Activated B cell treated with CpG ODN at 0.5 μM for 24 hours (primary cell): ENCODE measurements at regions of chr20 and their contacts with region 1.

Region 1: GRCh38 chr20:3045816-3046676 is at the start of gene MRPS26:
- DNase-seq: peak; percentile 88
- ATAC-seq: peak; percentile 91
- H3K4me3 Mint-ChIP-seq: peak within 1 kb of the TSS; percentile 84
- H3K27ac Mint-ChIP-seq: peak within 1 kb of the TSS; percentile 89
- H3K4me1 Mint-ChIP-seq: peaks cover 14% of the 10 kb centered on the region
- H3K27me3 Mint-ChIP-seq: no peaks in the 10 kb centered on the region
- CTCF ChIP-seq: no peak
- total RNA-seq, gene MRPS26: 30.6 and 34.7 TPM in 2 replicates

Region 2: GRCh38 chr20:2086177-2086979 is 959.7 kb before region 1 on chr20:
- CTCF ChIA-PET with region 1: no interaction called
- POLR2A ChIA-PET with region 1: no interaction called
- intact Hi-C with region 1: no loop called
- DNase-seq: no peak
- ATAC-seq: no peak
- H3K4me3 Mint-ChIP-seq: no peak overlapping the region
- H3K27ac Mint-ChIP-seq: no peak overlapping the region
- H3K4me1 Mint-ChIP-seq: no peaks in the 10 kb centered on the region
- H3K27me3 Mint-ChIP-seq: peaks cover 36% of the 10 kb centered on the region
- CTCF ChIP-seq: no peak

Region 3: DNA sequence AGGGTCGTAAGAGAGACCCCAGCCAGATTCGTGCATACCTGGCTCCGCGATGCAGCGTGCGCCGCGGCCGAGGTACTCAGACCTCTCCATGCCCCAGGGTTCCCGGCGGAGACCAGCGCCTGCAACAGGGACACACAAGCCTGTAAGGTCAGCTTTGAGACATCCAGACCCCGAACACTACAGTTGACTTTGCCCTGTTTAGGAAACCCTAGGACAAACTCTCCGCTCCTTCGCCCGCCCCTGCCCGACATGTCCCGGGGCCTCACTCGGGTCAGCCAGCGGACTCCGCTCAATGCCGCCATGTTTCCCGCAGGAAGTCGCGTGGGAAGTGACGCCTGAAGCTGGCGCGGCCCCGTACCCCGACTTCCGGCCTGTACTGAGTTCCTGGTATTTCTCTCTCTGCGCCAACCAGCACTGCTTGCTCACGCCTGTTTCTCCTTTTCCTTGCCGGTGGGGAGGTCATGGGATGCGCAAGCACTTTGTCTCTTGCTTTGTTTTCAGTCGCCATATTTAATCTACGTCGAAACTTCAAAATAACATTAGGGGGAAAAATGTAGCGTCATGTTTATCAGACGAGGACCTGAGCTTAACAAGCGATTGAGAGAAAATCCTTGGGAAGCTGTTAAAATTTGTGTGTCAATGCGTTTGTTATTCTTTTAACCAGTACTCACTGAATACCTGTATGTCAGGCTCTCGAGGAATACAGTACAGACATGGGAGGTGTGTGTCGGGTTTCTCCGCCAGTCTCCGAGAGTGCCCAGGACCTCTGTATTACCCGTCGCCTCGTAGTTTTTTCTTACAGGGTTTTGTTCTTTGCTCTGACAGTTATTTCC is 381.9 kb before region 1 on chr20 and contains the start of gene IDH3B:
- CTCF ChIA-PET with region 1: no interaction called
- POLR2A ChIA-PET with region 1: no interaction called
- intact Hi-C with region 1: loop called (anchors 1 kb)
- DNase-seq: peak; percentile 84
- ATAC-seq: peak; percentile 95
- H3K4me3 Mint-ChIP-seq: peak within 1 kb of the TSS; percentile 93
- H3K27ac Mint-ChIP-seq: peak within 1 kb of the TSS; percentile 98
- H3K4me1 Mint-ChIP-seq: peaks cover 19% of the 10 kb centered on the region
- H3K27me3 Mint-ChIP-seq: peaks cover 6% of the 10 kb centered on the region
- CTCF ChIP-seq: no peak
- total RNA-seq, gene IDH3B: 121 and 127 TPM in 2 replicates

Region 4: GRCh38 chr20:2880650-2881049 is 165.4 kb before region 1 on chr20:
- CTCF ChIA-PET with region 1: no interaction called
- POLR2A ChIA-PET with region 1: no interaction called
- intact Hi-C with region 1: no loop called
- DNase-seq: no peak
- ATAC-seq: no peak
- H3K4me3 Mint-ChIP-seq: no peak overlapping the region
- H3K27ac Mint-ChIP-seq: no peak overlapping the region
- H3K4me1 Mint-ChIP-seq: peaks cover 50% of the 10 kb centered on the region
- H3K27me3 Mint-ChIP-seq: no peaks in the 10 kb centered on the region
- CTCF ChIP-seq: no peak

Region 5: DNA sequence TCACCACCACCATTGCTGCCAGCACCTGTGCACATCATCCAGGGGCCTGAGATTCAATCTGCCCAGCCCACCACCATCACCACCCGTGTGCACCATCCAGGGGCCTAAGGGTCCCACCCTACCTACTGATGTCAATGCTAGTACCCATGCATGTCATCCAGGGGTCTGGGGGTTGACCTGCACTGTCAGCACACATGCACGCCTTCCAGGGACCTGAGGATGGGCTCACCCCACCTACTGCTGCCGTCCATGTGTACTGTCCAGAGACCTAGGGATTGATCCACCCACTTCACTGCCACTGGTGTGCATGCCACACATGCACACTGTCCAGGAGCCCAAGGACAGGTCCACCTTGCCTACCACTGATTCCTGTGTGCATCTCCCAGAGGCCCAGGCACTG is 13.4 kb after region 1 on chr20:
- CTCF ChIA-PET with region 1: no interaction called
- POLR2A ChIA-PET with region 1: no interaction called
- intact Hi-C with region 1: no loop called
- DNase-seq: no peak
- ATAC-seq: no peak
- H3K4me3 Mint-ChIP-seq: no peak overlapping the region
- H3K27ac Mint-ChIP-seq: no peak overlapping the region
- H3K4me1 Mint-ChIP-seq: peaks cover 3% of the 10 kb centered on the region
- H3K27me3 Mint-ChIP-seq: no peaks in the 10 kb centered on the region
- CTCF ChIP-seq: no peak

Region 6: GRCh38 chr20:3092611-3093379 is 46.7 kb after region 1 on chr20:
- CTCF ChIA-PET with region 1: no interaction called
- POLR2A ChIA-PET with region 1: no interaction called
- intact Hi-C with region 1: loop called (anchors 2 kb)
- DNase-seq: peak; percentile 47
- ATAC-seq: peak; percentile 54
- H3K4me3 Mint-ChIP-seq: peak overlapping the region; percentile 94
- H3K27ac Mint-ChIP-seq: peak overlapping the region; percentile 95
- H3K4me1 Mint-ChIP-seq: peaks cover 23% of the 10 kb centered on the region
- H3K27me3 Mint-ChIP-seq: peaks cover 22% of the 10 kb centered on the region
- CTCF ChIP-seq: no peak

Region 7: DNA sequence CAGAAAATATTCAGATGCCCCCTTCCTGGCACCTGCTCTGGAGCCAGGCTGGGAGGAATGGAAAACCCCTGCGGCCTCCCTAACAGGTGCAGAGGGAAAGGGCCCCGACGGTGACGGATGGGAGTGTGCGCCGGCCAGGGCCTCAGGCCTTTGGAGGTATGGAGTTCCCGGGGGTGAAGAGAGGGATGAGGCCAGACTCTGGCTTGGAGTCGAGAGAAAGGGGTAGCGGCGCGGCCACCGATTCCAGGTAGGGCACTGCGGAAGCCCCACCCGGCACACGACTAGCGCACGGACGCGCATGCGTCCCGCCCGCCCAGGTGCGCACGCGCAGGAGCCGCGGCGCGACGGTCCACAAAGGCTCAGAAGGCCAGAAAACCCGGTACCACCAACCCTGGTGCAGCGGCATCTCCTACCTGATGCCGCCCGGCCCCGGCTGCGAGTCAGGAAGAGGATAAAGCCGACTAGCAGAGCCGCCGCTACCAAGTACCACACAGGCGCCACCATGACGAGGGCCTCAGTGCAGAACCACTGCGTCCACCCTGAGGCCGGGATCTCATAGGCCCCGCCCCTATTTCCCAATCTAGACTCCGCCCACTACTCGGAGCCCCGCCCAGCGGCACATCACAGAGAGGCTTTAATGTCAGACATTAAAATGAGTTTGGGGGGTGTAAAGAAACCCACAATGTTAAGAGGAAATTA is 158.2 kb after region 1 on chr20 and contains the start of gene DDRGK1:
- CTCF ChIA-PET with region 1: no interaction called
- POLR2A ChIA-PET with region 1: interaction called, 3 read pairs
- intact Hi-C with region 1: loop called (anchors 1 kb)
- DNase-seq: peak; percentile 93
- ATAC-seq: peak; percentile 93
- H3K4me3 Mint-ChIP-seq: peak within 1 kb of the TSS; percentile 97
- H3K27ac Mint-ChIP-seq: peak within 1 kb of the TSS; percentile 94
- H3K4me1 Mint-ChIP-seq: peaks cover 22% of the 10 kb centered on the region
- H3K27me3 Mint-ChIP-seq: no peaks in the 10 kb centered on the region
- CTCF ChIP-seq: no peak
- total RNA-seq, gene DDRGK1: 37.1 and 46.1 TPM in 2 replicates

Region 8: GRCh38 chr20:4014031-4014474 is 968.0 kb after region 1 on chr20:
- CTCF ChIA-PET with region 1: no interaction called
- POLR2A ChIA-PET with region 1: no interaction called
- intact Hi-C with region 1: loop called (anchors 10 kb)
- DNase-seq: no peak
- ATAC-seq: no peak
- H3K4me3 Mint-ChIP-seq: peak overlapping the region; percentile 83
- H3K27ac Mint-ChIP-seq: no peak overlapping the region
- H3K4me1 Mint-ChIP-seq: peaks cover 33% of the 10 kb centered on the region
- H3K27me3 Mint-ChIP-seq: peaks cover 2% of the 10 kb centered on the region
- CTCF ChIP-seq: no peak